Calu3 (cell line): ENCODE measurements at regions of chr6 and their contacts with region 1.

Region 1: GRCh38 chr6:124961777-124962611 is at the start of gene RNF217:
- DNase-seq: peak; percentile 57
- H3K4me3 Mint-ChIP-seq: peak within 1 kb of the TSS; percentile 92
- H3K27ac Mint-ChIP-seq: peak within 1 kb of the TSS; percentile 88
- H3K4me1 Mint-ChIP-seq: peaks cover 25% of the 10 kb centered on the region
- H3K27me3 Mint-ChIP-seq: no peaks in the 10 kb centered on the region
- CTCF ChIP-seq: no peak
- total RNA-seq, gene RNF217: 15.4 and 16.4 TPM in 2 replicates

Region 2: DNA sequence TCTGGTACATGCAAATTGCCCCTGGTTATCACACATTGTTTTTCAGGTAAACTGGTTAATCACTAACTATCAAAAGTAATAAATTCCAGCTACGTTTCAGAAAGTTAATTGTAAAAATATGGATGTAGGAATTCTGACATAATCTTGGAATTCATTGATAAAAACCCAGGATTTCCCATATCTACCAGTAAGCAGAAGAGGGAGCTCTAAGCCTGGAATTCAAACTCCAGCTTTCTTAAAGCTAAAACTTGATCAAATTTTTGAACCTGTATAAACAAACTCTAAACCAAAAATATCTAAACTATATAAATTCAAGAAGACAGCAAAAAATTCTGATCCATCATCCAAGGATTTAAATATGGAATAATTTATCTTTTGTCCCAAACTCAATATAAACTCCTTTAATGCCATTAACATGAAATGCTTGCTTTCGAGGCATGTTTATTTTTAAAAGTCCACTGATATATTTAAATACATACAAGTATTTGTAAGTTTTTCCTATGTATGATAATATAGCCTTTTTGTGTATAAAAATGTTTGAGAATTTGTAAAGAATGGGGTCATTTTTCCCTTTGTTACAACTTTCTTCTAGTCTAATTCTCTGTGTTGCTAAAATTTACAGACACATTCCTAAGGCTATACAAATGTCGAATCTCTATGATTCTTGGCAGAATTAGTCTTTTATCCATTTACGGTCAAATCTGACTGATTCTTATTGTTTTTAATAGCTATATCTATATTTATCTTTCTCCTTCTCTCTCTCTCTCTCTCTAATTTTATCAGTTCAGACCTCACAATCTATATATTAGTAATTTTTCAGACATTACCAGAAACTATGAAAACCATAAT is 91.2 kb before region 1 on chr6:
- CTCF ChIA-PET with region 1: no interaction called
- intact Hi-C with region 1: loop called (anchors 2 kb)
- DNase-seq: peak; percentile 7
- H3K4me3 Mint-ChIP-seq: no peak overlapping the region
- H3K27ac Mint-ChIP-seq: no peak overlapping the region
- H3K4me1 Mint-ChIP-seq: no peaks in the 10 kb centered on the region
- H3K27me3 Mint-ChIP-seq: no peaks in the 10 kb centered on the region
- CTCF ChIP-seq: peak; percentile 30

Region 3: GRCh38 chr6:124881898-124882579 is 80.0 kb before region 1 on chr6:
- CTCF ChIA-PET with region 1: no interaction called
- intact Hi-C with region 1: no loop called
- DNase-seq: no peak
- H3K4me3 Mint-ChIP-seq: peak overlapping the region; percentile 29
- H3K27ac Mint-ChIP-seq: peak overlapping the region; percentile 80
- H3K4me1 Mint-ChIP-seq: peaks cover 17% of the 10 kb centered on the region
- H3K27me3 Mint-ChIP-seq: no peaks in the 10 kb centered on the region
- CTCF ChIP-seq: no peak

Region 4: DNA sequence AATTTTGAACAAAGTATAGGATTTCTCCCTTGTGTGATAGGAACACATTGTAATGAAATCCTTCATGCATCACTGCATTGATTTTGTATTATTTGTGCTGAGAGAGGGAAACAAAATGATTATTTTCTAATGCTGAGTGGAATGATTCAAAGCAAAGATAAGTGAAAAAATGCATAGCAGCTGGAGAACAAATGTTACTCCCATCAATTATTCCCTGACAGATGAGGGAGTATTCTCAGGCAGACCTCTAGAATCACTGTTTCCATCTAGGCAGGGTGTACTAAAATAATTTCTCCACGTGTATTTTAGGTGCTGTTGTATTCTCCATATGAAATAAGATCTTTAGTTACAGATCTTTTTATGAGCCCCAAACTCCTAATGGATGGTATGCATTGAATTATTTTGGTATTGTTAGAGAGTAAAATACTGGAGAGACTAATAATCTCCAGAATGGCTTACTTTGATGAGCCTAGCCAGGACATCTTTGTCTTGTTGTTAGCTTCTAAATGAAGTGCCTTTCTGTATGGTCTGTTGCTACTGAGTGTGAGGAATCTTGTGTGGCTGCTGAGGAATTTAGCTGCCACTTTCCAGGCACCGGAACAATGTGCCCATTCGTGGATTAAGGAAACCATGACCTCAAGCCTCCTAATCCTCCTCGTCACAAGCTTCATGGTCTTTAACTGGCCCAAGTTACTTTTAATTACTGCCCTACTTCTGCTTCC is 39.9 kb after region 1 on chr6:
- CTCF ChIA-PET with region 1: interaction called, 3 read pairs
- intact Hi-C with region 1: loop called (anchors 5 kb)
- DNase-seq: peak; percentile 1
- H3K4me3 Mint-ChIP-seq: peak overlapping the region; percentile 70
- H3K27ac Mint-ChIP-seq: peak overlapping the region; percentile 76
- H3K4me1 Mint-ChIP-seq: peaks cover 24% of the 10 kb centered on the region
- H3K27me3 Mint-ChIP-seq: no peaks in the 10 kb centered on the region
- CTCF ChIP-seq: no peak

Region 5: DNA sequence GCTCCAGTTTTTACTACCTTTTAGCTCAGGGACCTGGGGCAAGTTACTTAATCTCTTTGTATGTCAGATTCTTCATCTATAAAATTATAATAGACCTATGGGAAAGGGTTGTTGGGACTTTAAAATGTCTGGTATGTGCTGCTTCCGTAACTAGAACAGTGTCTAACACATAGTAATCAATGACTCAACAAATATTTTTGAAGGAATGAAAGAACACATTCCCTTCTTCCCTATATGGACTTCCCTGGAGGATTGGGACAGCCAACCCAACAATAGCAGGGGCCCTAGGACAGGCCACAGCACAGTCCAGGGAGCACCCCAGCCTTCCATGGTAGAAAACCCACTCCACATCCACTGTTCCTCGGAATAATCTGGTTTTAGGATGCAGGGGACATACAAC is 140.9 kb after region 1 on chr6:
- CTCF ChIA-PET with region 1: no interaction called
- intact Hi-C with region 1: loop called (anchors 2 kb)
- DNase-seq: peak; percentile 18
- H3K4me3 Mint-ChIP-seq: no peak overlapping the region
- H3K27ac Mint-ChIP-seq: no peak overlapping the region
- H3K4me1 Mint-ChIP-seq: peaks cover 29% of the 10 kb centered on the region
- H3K27me3 Mint-ChIP-seq: no peaks in the 10 kb centered on the region
- CTCF ChIP-seq: no peak

Region 6: DNA sequence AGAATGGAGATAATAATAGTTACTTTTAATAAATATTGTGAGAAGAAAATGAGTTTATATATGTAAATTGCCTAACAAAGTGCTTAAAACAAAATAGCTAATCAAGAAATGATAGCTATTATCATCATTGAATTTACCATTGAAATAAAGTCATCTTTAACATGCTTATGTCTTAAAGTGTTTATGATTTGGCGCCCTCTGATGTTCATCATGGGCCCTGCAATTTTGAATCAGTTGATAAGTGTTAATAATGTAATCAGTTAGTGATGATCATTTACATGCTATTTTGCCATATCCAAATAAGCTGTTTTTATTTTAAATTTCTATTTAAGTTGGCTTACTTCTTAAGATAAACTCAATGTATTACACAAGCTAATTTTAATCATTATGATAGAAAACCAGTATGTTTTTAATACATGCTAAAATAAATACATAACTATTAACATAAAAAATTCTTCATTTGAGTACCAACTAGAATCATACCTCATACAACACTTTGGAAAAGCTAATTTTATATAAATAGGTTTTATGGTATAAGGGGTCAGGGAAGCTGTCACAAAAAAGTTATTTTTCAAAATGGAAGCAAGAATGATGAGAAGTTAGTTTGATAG is 152.4 kb after region 1 on chr6:
- CTCF ChIA-PET with region 1: interaction called, 10 read pairs
- intact Hi-C with region 1: no loop called
- DNase-seq: peak; percentile 43
- H3K4me3 Mint-ChIP-seq: no peak overlapping the region
- H3K27ac Mint-ChIP-seq: no peak overlapping the region
- H3K4me1 Mint-ChIP-seq: no peaks in the 10 kb centered on the region
- H3K27me3 Mint-ChIP-seq: no peaks in the 10 kb centered on the region
- CTCF ChIP-seq: peak; percentile 44